ENCODE measurements at regions of chr3 and their contacts with region 1.

Region 1: DNA sequence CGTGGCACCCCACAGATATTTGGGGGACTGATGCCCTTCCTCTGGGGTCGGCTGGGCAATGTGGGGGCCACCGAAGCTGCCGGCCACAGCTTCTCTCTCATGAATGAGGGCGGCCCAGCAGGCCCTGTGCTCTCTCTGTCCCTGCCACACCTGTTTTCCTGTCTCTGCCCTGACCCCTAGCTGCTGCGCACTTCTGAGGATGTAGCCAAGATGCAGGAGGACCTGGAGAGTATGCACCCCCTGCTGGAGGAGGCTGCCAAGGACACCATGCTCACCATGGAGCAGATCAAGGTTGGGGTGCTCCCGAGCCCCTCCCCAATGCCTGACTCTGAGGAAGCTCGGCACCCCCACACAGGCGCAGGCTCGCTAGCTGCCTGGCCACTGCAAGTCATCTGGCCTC is 59.7 kb downstream of the SEMA3G start:
- DNase-seq: peak; percentile 48 to 64
- H3K4me3 ChIP-seq: no peak overlapping the region
- H3K27ac ChIP-seq: no peak overlapping the region
- H3K4me1 ChIP-seq: no peaks in the 10 kb centered on the region
- H3K27me3 ChIP-seq: no peaks in the 10 kb centered on the region
- CTCF ChIP-seq: peak; percentile 69

Region 2: DNA sequence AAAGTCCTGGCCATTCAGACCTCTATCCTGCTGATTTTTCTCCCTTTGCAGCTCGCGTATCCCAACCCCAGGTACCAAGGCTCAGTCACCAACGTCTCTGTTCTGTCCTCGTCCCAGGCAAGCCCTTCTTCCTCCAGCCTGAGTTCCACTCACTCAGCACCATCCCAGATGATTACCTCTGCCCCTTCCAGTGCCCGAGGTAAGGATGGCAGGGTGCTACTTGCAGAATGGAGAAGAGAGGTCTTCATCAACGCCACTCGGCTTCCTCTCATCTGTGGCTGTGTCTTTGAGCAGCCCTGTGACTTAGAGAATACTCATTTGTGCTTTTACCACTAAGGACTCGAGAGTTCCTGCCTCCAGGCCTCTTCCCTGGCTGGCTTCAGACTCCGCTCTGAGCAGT is 1022.7 kb before region 1 on chr3:
- CTCF ChIA-PET with region 1: no interaction called
- POLR2A ChIA-PET with region 1: no interaction called
- intact Hi-C with region 1: no loop called
- DNase-seq: no peak
- H3K4me3 ChIP-seq: no peak overlapping the region
- H3K27ac ChIP-seq: no peak overlapping the region
- H3K4me1 ChIP-seq: no peaks in the 10 kb centered on the region
- H3K27me3 ChIP-seq: no peaks in the 10 kb centered on the region
- CTCF ChIP-seq: no peak

Region 3: GRCh38 chr3:52231502-52232293 is 153.5 kb before region 1 on chr3:
- CTCF ChIA-PET with region 1: no interaction called
- POLR2A ChIA-PET with region 1: no interaction called
- intact Hi-C with region 1: loop called (anchors 5 kb)
- DNase-seq: peak in 1 of 2 experiments; percentile 79
- H3K4me3 ChIP-seq: no peak overlapping the region
- H3K27ac ChIP-seq: no peak overlapping the region
- H3K4me1 ChIP-seq: peaks cover 15% of the 10 kb centered on the region
- H3K27me3 ChIP-seq: no peaks in the 10 kb centered on the region
- CTCF ChIP-seq: peak; percentile 86

Region 4: GRCh38 chr3:52291508-52292181 is 93.5 kb before region 1 on chr3:
- CTCF ChIA-PET with region 1: no interaction called
- POLR2A ChIA-PET with region 1: no interaction called
- intact Hi-C with region 1: loop called (anchors 5 kb)
- DNase-seq: peak in 1 of 2 experiments; percentile 21
- H3K4me3 ChIP-seq: no peak overlapping the region
- H3K27ac ChIP-seq: no peak overlapping the region
- H3K4me1 ChIP-seq: peaks cover 7% of the 10 kb centered on the region; the same call in 1 of the 2 replicates
- H3K27me3 ChIP-seq: no peaks in the 10 kb centered on the region
- CTCF ChIP-seq: peak; percentile 64

Region 5: DNA sequence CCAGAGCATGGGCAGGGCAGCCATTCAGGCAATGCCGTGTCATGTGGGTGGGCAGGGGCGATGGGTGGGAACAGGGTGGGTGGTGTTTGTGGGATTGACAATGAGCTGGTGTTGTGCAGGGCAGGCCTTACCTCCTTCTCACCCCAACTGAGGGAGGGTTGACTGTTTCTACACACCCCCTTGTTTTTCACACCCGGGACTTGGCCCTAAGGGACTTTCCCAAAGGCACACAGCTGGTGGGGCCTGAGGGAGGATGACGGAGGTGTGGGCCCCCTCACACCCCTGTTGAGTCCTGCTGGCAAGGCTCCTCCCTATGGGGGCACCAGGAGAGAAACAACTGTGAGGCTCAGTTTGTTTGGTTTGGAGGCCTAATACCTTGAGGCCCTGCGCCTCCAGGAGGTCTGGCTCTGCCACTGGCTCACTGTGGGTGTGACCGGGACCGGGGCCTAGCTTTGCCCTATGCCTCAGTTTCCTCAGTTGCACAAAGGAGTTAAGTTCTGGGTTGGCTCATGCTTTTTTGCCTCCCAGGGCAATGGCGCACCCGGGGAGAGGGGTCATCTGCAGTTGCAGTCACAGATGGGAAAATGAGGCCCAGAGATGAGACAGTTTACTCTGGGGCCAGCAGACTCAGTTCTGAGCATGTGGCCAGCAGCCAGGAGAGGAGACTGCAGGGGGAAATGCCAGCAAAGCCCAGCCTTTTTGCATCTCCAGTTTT is 74.1 kb before region 1 on chr3:
- CTCF ChIA-PET with region 1: no interaction called
- POLR2A ChIA-PET with region 1: no interaction called
- intact Hi-C with region 1: no loop called
- DNase-seq: no peak
- H3K4me3 ChIP-seq: no peak overlapping the region
- H3K27ac ChIP-seq: no peak overlapping the region
- H3K4me1 ChIP-seq: peaks cover 19% of the 10 kb centered on the region
- H3K27me3 ChIP-seq: no peaks in the 10 kb centered on the region
- CTCF ChIP-seq: no peak

Region 6: DNA sequence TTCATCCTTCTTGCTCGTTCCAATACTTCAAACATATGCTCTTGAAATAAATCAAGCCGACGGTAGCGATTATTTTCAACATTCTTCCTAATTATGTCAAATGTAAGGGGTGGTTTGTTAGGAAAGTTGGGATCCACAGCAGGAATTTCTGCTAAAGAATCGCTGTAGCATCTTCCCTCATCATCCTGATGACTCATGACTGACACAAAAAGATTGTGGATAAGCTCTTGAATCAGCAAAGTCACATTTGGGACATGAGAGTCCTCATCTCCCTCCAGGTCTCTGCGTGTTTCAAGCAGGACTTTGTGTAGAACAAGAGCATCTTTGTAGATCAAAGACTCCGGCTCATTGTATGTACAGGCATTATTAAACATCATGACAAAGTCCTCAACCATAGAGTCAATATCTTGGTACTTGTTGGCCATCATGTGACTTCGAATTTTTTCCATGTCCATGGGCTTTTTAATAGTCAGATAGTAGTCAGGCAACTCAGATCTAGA is 224.2 kb after region 1 on chr3:
- CTCF ChIA-PET with region 1: no interaction called
- POLR2A ChIA-PET with region 1: no interaction called
- intact Hi-C with region 1: no loop called
- DNase-seq: no peak
- H3K4me3 ChIP-seq: no peak overlapping the region
- H3K27ac ChIP-seq: no peak overlapping the region
- H3K4me1 ChIP-seq: peaks cover 19% of the 10 kb centered on the region
- H3K27me3 ChIP-seq: no peaks in the 10 kb centered on the region
- CTCF ChIP-seq: no peak

Measured in PC-9 (cell line).